CD4-positive, alpha-beta T cell (primary cell): ENCODE measurements at regions of chr16 and their contacts with region 1.

Region 1: DNA sequence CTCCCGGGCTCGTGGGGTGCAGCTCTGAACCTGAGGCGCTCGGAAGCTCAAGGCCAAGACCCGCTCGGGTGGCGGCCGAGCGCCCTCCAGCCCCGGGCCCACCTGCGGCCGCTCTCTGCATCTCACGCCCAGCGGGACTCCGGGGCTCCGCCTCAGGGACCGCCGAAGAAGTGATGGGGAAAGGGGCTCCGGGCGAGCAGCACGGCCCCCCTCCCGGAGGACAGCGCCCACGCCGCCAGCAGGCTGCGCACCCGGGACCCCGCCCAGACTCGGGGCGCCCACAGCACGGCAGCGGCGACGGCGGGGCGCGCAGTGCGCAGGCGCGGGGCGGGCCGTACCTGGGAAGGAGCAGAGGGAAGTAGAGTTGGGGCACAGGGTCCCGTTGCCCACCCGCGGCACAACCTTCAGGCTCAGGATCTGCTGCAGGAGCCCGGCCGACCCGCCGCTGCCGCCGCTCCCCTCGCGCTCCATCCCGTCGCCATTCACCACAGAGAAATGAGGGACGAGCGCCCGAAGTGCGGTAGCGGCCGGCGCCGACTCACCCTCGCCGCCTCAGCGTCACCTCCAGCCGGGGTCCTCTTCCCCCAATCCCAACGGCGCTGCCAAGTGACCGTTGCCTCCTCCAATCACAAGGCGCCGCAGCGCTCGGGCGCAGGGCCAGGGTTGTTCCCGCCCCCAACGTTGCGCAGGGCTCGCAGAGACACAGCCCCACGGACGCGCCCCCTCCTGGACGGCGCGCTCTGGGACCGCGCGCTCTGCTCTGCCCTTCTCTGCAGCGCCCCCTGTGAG is at the start of gene TMEM170A:
- DNase-seq: peak; percentile 97 to 100 (median 99)
- ATAC-seq: peak; percentile 86
- H3K4me3 ChIP-seq: peak within 1 kb of the TSS; percentile 87
- H3K4me3 Mint-ChIP-seq: peak within 1 kb of the TSS; percentile 96
- H3K27ac ChIP-seq: peak within 1 kb of the TSS; percentile 88 to 99
- H3K27ac Mint-ChIP-seq: peak within 1 kb of the TSS; percentile 95
- H3K4me1 ChIP-seq: peaks cover 40% of the 10 kb centered on the region
- H3K4me1 Mint-ChIP-seq: peaks cover 47% of the 10 kb centered on the region
- H3K27me3 ChIP-seq: no peaks in the 10 kb centered on the region
- H3K27me3 Mint-ChIP-seq: no peaks in the 10 kb centered on the region
- CTCF ChIP-seq: peak; percentile 100
- total RNA-seq, gene TMEM170A: 34.3 to 37.8 TPM

Region 2: GRCh38 chr16:75198135-75198600 is 266.2 kb before region 1 on chr16:
- CTCF ChIA-PET with region 1: interaction called, 4 read pairs
- POLR2A ChIA-PET with region 1: no interaction called
- intact Hi-C with region 1: loop called (anchors 1 to 2 kb)
- DNase-seq: peak in 1 of 14 experiments; percentile 17
- ATAC-seq: no peak
- H3K4me3 ChIP-seq: no peak overlapping the region
- H3K4me3 Mint-ChIP-seq: no peak overlapping the region
- H3K27ac ChIP-seq: no peak overlapping the region
- H3K27ac Mint-ChIP-seq: no peak overlapping the region
- H3K4me1 ChIP-seq: peaks cover 15% of the 10 kb centered on the region
- H3K4me1 Mint-ChIP-seq: peaks cover 33% of the 10 kb centered on the region
- H3K27me3 ChIP-seq: peaks cover 3 to 4% of the 10 kb centered on the region in 2 experiments
- H3K27me3 Mint-ChIP-seq: peaks cover 24% of the 10 kb centered on the region
- CTCF ChIP-seq: no peak

Region 3: GRCh38 chr16:75432828-75433731 is 31.2 kb before region 1 on chr16 and contains the start of gene CFDP1:
- CTCF ChIA-PET with region 1: interaction called, 25 read pairs
- POLR2A ChIA-PET with region 1: interaction called, 61 read pairs
- intact Hi-C with region 1: loop called (anchors 1 kb)
- DNase-seq: peak; percentile 92 to 98 (median 94)
- ATAC-seq: peak; percentile 79
- H3K4me3 ChIP-seq: peak within 1 kb of the TSS; percentile 83
- H3K4me3 Mint-ChIP-seq: peak within 1 kb of the TSS; percentile 94
- H3K27ac ChIP-seq: peak within 1 kb of the TSS; percentile 96 to 97
- H3K27ac Mint-ChIP-seq: peak within 1 kb of the TSS; percentile 96
- H3K4me1 ChIP-seq: peaks cover 33% of the 10 kb centered on the region
- H3K4me1 Mint-ChIP-seq: peaks cover 28% of the 10 kb centered on the region
- H3K27me3 ChIP-seq: no peaks in the 10 kb centered on the region
- H3K27me3 Mint-ChIP-seq: no peaks in the 10 kb centered on the region
- CTCF ChIP-seq: no peak
- total RNA-seq, gene CFDP1: 23.0 to 25.5 TPM

Region 4: DNA sequence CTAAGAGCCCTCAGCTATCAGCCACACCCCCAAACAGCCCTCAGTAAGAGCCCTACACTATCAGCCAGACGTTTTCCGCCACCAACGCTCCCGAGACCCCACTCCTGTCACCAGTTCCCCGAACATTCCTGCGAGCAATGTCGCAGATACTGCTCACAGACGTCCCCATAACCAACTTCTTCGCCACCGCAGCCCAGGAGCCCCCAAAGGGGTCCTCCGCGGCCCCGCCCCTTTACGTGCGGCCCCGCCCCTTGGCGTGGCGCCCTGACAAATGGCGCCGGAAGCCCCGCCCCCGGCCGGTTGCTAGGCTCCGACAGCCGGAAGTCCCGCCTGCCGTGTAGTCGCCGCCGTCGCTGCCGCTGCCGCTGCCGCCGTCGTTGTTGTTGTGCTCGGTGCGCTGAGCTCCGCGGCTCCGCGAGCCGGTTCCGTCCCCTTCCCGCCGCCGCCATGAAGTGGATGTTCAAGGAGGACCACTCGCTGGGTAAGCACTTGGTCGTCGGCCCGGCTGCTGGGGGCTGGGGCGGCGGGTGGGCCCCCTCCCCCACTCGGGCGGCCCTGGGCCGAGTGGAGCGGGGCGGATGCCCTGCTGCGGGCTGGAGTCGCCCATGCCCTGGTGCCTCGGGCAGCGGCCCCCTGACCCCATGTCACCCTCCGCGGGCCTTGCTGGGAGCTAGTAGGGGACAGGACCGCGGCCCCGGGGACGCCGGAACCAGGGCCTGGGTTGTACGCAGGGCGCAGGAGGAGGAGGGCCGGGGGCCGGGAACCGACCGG is 101.9 kb after region 1 on chr16 and contains the start of gene GABARAPL2:
- CTCF ChIA-PET with region 1: no interaction called
- POLR2A ChIA-PET with region 1: interaction called, 3 read pairs
- intact Hi-C with region 1: loop called (anchors 5 kb)
- DNase-seq: peak; percentile 83 to 95 (median 88)
- ATAC-seq: peak; percentile 75
- H3K4me3 ChIP-seq: peak within 1 kb of the TSS; percentile 90
- H3K4me3 Mint-ChIP-seq: peak within 1 kb of the TSS; percentile 94
- H3K27ac ChIP-seq: peak within 1 kb of the TSS; percentile 69 to 76
- H3K27ac Mint-ChIP-seq: peak within 1 kb of the TSS; percentile 89
- H3K4me1 ChIP-seq: peaks cover 41% of the 10 kb centered on the region
- H3K4me1 Mint-ChIP-seq: peaks cover 39% of the 10 kb centered on the region
- H3K27me3 ChIP-seq: no peaks in the 10 kb centered on the region
- H3K27me3 Mint-ChIP-seq: peaks cover 14% of the 10 kb centered on the region
- CTCF ChIP-seq: no peak
- total RNA-seq, gene GABARAPL2: 44.6 to 48.3 TPM

Region 5: DNA sequence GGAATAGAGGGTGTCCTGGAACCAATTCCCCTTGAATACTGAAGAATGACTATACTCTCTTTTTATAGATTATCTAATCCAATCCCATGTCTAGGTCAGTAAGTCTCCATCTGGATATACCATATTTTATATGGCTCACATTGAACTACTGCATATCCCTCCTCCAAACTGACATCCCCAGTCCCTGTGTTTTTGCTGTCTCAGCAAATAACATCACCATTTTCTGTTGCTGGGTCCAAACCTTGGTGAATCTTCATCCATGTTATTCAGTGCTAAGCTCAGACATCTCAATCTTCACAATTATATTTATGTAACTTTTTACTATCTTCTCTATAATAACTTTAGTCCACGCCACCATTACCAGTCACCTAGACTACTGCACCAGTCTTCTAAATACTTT is 543.3 kb after region 1 on chr16:
- CTCF ChIA-PET with region 1: no interaction called
- POLR2A ChIA-PET with region 1: no interaction called
- intact Hi-C with region 1: no loop called
- DNase-seq: no peak
- ATAC-seq: no peak
- H3K4me3 ChIP-seq: no peak overlapping the region
- H3K4me3 Mint-ChIP-seq: no peak overlapping the region
- H3K27ac ChIP-seq: no peak overlapping the region
- H3K27ac Mint-ChIP-seq: no peak overlapping the region
- H3K4me1 ChIP-seq: no peaks in the 10 kb centered on the region
- H3K4me1 Mint-ChIP-seq: no peaks in the 10 kb centered on the region
- H3K27me3 ChIP-seq: no peaks in the 10 kb centered on the region
- H3K27me3 Mint-ChIP-seq: no peaks in the 10 kb centered on the region
- CTCF ChIP-seq: no peak